ENCODE measurements at regions of chr3 and their contacts with region 1.

Region 1: GRCh38 chr3:4716706-4717363 is 223.7 kb downstream of the ITPR1 start:
- DNase-seq: no peak
- ATAC-seq: no peak

Region 2: GRCh38 chr3:4355401-4356219 is 361.2 kb before region 1 on chr3:
- intact Hi-C with region 1: no loop called
- DNase-seq: peak; percentile 64
- ATAC-seq: no peak

Region 3: GRCh38 chr3:5026331-5027218 is 309.7 kb after region 1 on chr3:
- intact Hi-C with region 1: loop called (anchors 2 kb)
- DNase-seq: peak; percentile 93
- ATAC-seq: peak; percentile 96

Region 4: DNA sequence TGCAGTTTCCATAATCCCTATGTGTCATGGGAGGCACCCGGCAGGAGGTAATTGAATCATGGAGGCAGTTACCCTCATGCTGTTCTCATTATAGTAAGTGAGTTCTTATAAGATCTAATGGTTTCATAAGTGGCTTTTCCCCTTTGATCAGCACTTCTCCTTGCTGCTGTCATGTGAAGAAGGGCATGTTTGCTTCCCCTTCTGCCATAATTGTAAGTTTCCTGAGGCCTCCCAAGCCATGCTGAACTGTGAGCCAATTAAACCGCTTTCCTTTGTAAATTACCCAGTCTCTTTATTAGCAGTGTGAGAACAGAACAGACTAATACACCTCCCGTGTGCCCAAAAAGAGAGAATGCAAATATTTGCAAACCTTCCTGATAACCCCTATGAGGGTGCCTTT is 330.9 kb after region 1 on chr3:
- intact Hi-C with region 1: loop called (anchors 5 kb)
- DNase-seq: no peak
- ATAC-seq: no peak